ENCODE measurements at regions of chr19 and their contacts with region 1.

Region 1: DNA sequence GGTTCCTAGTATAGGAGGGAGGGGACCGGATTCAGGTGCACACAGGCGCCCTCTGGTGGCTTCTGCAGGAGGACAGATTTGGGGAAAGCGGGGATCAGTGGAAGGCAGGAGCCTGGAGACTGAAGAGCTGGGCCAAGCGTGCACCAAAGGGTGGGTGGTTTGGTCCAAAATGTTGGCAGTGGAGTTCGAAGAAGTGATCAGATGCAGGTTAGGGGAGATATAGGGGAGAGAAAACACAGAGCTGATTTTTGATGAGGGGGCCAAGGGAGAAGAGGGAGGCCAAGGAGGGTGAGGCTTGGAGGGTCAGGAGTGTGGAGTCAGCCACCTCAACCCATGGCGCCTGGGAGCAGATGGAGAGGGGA is 6.8 kb upstream of the CARM1 start:
- DNase-seq: peak; percentile 86 to 89
- ATAC-seq: peak; percentile 66 to 92 (median 86)
- H3K4me3 ChIP-seq: peak overlapping the region in 1 of 10 donors; percentile 15
- H3K27ac ChIP-seq: peak overlapping the region in 3 of 10 donors; percentile 8 to 38 (median 18)
- H3K4me1 ChIP-seq: peaks cover 0 to 39% (median 6%) of the 10 kb centered on the region in 9 donors
- H3K27me3 ChIP-seq: no peaks in the 10 kb centered on the region
- CTCF ChIP-seq: peak; percentile 83 to 94 (median 91)

Region 2: DNA sequence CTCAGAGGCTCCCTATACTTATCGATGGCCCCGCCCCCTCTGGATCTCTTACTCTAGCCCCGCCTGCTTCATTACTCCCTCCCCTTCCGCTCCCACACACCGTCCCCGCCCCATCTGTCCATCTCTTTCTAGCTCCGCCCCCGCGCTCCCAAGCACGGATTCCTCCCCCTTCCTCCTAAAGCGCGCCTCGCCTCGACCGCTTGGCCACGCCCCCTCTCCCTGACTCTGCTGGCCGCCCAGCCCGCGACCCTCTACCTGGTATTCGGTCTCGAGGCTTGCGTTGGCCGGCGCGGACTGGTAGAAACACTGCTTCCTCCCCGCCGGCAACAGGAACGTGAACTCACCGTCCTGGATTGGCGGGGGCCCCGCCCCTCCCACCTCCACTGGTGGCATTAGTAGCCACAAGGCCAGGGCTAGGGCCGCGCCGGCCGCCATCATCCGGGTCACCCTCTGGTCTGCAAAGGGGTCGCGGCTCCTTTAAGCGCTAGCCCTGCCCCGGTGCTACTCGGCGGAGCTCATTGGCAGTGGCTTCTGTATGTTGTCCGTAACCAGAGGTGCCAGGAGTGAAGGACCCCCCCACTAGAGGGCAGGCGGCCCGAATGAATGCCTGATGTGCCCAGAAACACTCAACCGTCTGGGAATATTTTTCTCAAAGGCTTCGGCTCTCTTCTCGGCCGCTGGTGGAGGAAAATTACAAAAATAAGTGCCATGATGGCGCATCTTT is 28.6 kb before region 1 on chr19 and contains the start of gene TMED1:
- intact Hi-C with region 1: loop called in 1 of 10 experiments (anchors 2 kb)
- DNase-seq: peak; percentile 97 to 100
- ATAC-seq: peak; percentile 91 to 96 (median 94)
- H3K4me3 ChIP-seq: peak within 1 kb of the TSS; percentile 55 to 86 (median 72)
- H3K27ac ChIP-seq: peak within 1 kb of the TSS; percentile 94 to 99 (median 98)
- H3K4me1 ChIP-seq: peaks cover 0 to 16% (median 5%) of the 10 kb centered on the region in 9 donors
- H3K27me3 ChIP-seq: no peaks in the 10 kb centered on the region
- CTCF ChIP-seq: peak in 7 of 9 donors; percentile 16 to 58 (median 43)
- total RNA-seq, gene TMED1: 25.9 to 38.6 (median 32.9) TPM

Region 3: GRCh38 chr19:10848230-10848856 is 16.2 kb before region 1 on chr19 and contains the start of gene C19orf38:
- intact Hi-C with region 1: no loop called
- DNase-seq: no peak
- ATAC-seq: peak in 3 of 8 donors; percentile 37 to 55 (median 49)
- H3K4me3 ChIP-seq: peak within 1 kb of the TSS in 2 of 10 donors; percentile 1 to 40
- H3K27ac ChIP-seq: peak within 1 kb of the TSS in 2 of 10 donors; percentile 29 to 78
- H3K4me1 ChIP-seq: peaks cover 0 to 3% (median 0%) of the 10 kb centered on the region in 9 donors
- H3K27me3 ChIP-seq: peaks cover 0 to 7% (median 3%) of the 10 kb centered on the region in 7 donors
- CTCF ChIP-seq: no peak
- total RNA-seq, gene C19orf38: 0.27 to 4.0 (median 0.61) TPM in 9 of 10 donors, not detected in the other